HepG2 (cell line): ENCODE measurements at regions of chr12 and their contacts with region 1.

Region 1: GRCh38 chr12:3299929-3300832 is 190.8 kb upstream of the PRMT8 start:
- DNase-seq: peak; percentile 72
- ATAC-seq: peak; percentile 58
- H3K4me3 ChIP-seq: peak overlapping the region in 2 of 3 experiments; percentile 6 to 51; a peak in 4 of 6 replicates
- H3K27ac ChIP-seq: no peak overlapping the region
- H3K4me1 ChIP-seq: peaks cover 29% of the 10 kb centered on the region
- H3K27me3 ChIP-seq: peaks cover 2 to 54% of the 10 kb centered on the region in 2 experiments; a peak in 4 of 5 replicates
- CTCF ChIP-seq: peak; percentile 97
- EP300 ChIP-seq: no peak
- POLR2A ChIP-seq: no peak
- RAD21 ChIP-seq: peak; percentile 80

Region 2: GRCh38 chr12:3129301-3130056 is 170.7 kb before region 1 on chr12:
- CTCF ChIA-PET with region 1: no interaction called
- POLR2A ChIA-PET with region 1: no interaction called
- in situ Hi-C with region 1: no loop called
- intact Hi-C with region 1: no loop called
- DNase-seq: no peak
- ATAC-seq: no peak
- H3K4me3 ChIP-seq: no peak overlapping the region
- H3K27ac ChIP-seq: no peak overlapping the region
- H3K4me1 ChIP-seq: peaks cover 7% of the 10 kb centered on the region; the same call in 1 of the 2 replicates
- H3K27me3 ChIP-seq: no peaks in the 10 kb centered on the region
- CTCF ChIP-seq: no peak
- EP300 ChIP-seq: no peak
- POLR2A ChIP-seq: no peak
- RAD21 ChIP-seq: no peak

Region 3: DNA sequence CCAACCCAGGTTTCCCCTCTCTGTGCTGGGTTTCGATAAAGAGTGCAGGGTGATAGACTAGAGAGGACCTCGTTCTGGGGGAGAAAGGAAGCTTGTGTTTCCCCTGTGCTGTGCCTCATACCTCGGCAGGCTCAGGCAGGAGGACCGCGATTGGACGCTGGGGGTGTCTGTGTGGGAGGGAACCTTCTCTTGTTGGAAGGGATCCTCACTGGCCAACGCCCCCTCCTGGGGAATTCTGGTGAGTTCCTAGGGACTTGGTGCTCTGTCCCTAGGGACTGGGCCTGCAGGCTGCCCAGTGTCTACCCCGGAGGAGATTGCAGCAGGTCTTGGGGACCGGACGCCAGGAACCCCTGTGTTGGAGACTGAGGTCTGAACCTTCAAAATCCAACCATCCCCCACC is 33.4 kb after region 1 on chr12:
- CTCF ChIA-PET with region 1: interaction called, 4 read pairs
- POLR2A ChIA-PET with region 1: no interaction called
- in situ Hi-C with region 1: no loop called
- intact Hi-C with region 1: loop called (anchors 1 kb)
- DNase-seq: peak; percentile 48
- ATAC-seq: peak; percentile 63
- H3K4me3 ChIP-seq: no peak overlapping the region; a peak in 1 of 6 replicates
- H3K27ac ChIP-seq: no peak overlapping the region
- H3K4me1 ChIP-seq: peaks cover 52% of the 10 kb centered on the region
- H3K27me3 ChIP-seq: peaks cover 0 to 30% of the 10 kb centered on the region in 2 experiments; a peak in 2 of 5 replicates
- CTCF ChIP-seq: peak; percentile 32; the same call in 1 of the 2 replicates
- EP300 ChIP-seq: no peak
- POLR2A ChIP-seq: no peak
- RAD21 ChIP-seq: no peak

Region 4: GRCh38 chr12:3456809-3457208 is 156.6 kb after region 1 on chr12:
- CTCF ChIA-PET with region 1: no interaction called
- POLR2A ChIA-PET with region 1: no interaction called
- in situ Hi-C with region 1: no loop called
- intact Hi-C with region 1: loop called (anchors 5 kb)
- DNase-seq: peak; percentile 5
- ATAC-seq: peak; percentile 47
- H3K4me3 ChIP-seq: no peak overlapping the region
- H3K27ac ChIP-seq: no peak overlapping the region
- H3K4me1 ChIP-seq: no peaks in the 10 kb centered on the region
- H3K27me3 ChIP-seq: peaks cover 2 to 45% of the 10 kb centered on the region in 2 experiments
- CTCF ChIP-seq: peak; percentile 45
- EP300 ChIP-seq: no peak
- POLR2A ChIP-seq: no peak
- RAD21 ChIP-seq: no peak

Region 5: DNA sequence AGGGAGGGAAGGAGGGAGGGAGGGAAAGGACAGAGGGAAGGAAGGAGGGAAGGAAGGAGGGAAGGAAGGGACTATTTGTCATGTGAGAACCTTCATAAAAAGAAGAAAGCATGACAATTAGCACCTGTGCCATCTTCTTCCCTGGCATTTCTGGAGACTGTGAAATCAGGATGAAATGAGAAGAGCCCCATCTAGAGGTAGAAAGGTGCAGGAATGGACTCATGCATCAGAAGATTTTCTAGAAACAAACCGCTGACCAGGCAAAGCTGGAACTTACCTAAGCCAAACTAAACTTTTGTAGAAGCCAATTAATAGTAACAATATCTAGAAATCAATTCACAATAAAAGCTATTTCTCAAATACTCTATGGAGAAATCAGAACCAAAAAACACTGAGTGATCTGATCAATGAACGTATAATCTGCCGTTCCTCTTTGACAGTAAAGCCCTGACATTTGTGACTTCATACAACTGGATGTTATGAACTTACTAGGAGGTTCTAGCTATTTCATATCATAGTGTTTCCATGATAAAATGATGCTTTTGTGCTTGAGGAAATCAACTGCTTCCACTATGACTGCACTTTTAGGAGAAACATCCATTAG is 477.1 kb after region 1 on chr12:
- CTCF ChIA-PET with region 1: interaction called, 19 read pairs
- POLR2A ChIA-PET with region 1: no interaction called
- in situ Hi-C with region 1: loop called (anchors 10 kb)
- intact Hi-C with region 1: loop called (anchors 2 kb)
- DNase-seq: peak; percentile 30
- ATAC-seq: peak; percentile 66
- H3K4me3 ChIP-seq: no peak overlapping the region
- H3K27ac ChIP-seq: no peak overlapping the region
- H3K4me1 ChIP-seq: no peaks in the 10 kb centered on the region
- H3K27me3 ChIP-seq: no peaks in the 10 kb centered on the region; a peak in 1 of 5 replicates
- CTCF ChIP-seq: peak; percentile 74
- EP300 ChIP-seq: no peak
- POLR2A ChIP-seq: no peak
- RAD21 ChIP-seq: no peak

Region 6: DNA sequence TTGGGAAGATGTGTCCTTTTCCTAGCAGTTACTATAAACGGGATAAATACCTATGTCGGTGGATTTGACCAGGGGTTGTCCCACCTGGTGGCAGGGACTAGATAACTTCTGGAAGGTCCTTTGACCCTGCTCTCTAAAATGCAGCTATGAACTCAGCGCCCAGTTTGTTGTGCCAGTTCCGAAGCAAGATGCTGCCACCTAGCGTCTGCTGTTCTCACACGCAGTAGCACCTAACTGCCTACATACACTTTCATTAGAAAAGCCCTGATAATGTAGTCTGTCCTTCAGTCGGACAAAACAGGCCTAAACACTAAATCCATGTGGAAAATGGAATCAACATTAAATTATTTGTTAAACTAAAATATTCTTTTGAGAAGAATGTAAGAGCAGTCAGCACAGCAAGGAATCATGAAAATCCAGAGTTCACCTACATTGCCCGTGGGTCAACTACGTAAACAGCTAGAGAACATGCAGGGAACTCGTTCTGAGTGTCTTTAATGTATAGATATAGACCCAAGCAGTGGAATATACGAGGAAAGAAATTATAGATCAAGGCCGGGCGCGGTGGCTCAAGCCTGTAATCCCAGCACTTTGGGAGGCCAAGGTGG is 503.8 kb after region 1 on chr12:
- CTCF ChIA-PET with region 1: interaction called, 27 read pairs
- POLR2A ChIA-PET with region 1: no interaction called
- in situ Hi-C with region 1: loop called (anchors 10 kb)
- intact Hi-C with region 1: loop called (anchors 1 kb)
- DNase-seq: peak; percentile 59
- ATAC-seq: peak; percentile 92
- H3K4me3 ChIP-seq: no peak overlapping the region
- H3K27ac ChIP-seq: no peak overlapping the region
- H3K4me1 ChIP-seq: 0 out of 2 replicates have a peak, but pooled peaks cover 2% of the 10 kb centered on the region
- H3K27me3 ChIP-seq: no peaks in the 10 kb centered on the region
- CTCF ChIP-seq: peak; percentile 91
- EP300 ChIP-seq: no peak
- POLR2A ChIP-seq: no peak
- RAD21 ChIP-seq: peak; percentile 72